Activated CD8-positive, alpha-beta T cell treated with anti-CD3 and anti-CD28 coated beads for 36 hours (primary cell): ENCODE measurements at regions of chr5 and their contacts with region 1.

Region 1: GRCh38 chr5:178153573-178154343 is at the start of gene NHP2:
- DNase-seq: peak; percentile 99
- ATAC-seq: peak; percentile 98
- H3K4me3 Mint-ChIP-seq: peak within 1 kb of the TSS; percentile 97
- H3K27ac Mint-ChIP-seq: peak within 1 kb of the TSS; percentile 87
- H3K4me1 Mint-ChIP-seq: peaks cover 41% of the 10 kb centered on the region
- H3K27me3 Mint-ChIP-seq: no peaks in the 10 kb centered on the region
- CTCF ChIP-seq: no peak
- total RNA-seq, gene NHP2: 287 to 296 TPM

Region 2: DNA sequence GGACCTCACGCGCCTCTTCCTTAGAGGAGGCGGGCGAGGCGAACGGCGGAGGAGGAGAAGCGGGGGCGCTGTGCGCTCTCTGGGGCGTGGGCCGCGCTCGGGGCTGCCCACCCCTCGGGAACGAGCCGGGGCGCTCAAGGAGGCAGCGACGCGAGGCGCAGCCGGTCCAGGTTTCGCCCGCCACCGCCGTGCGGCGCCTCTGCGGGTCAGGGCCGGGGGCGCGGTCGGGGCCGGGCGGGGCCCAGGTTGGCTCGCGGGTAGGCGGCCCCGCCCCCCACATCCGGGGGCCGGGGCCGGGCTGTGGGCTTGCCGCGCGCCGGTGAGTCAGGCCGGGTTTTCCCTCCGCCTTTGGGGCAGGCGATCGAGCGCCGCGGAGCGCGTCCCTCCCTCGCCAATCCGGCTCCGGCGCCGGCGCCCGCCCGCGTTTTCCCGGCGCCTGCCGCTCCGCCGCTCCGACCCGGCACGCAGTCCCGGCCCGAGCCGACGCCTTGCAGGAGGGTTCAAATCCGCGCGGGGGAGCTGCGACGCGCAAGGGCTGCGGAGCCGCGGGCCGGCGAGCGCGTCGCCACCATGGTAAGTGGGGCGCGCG is 40.5 kb before region 1 on chr5 and contains the start of gene N4BP3:
- CTCF ChIA-PET with region 1: interaction called, 84 read pairs
- POLR2A ChIA-PET with region 1: interaction called, 7 read pairs
- intact Hi-C with region 1: loop called (anchors 5 kb)
- DNase-seq: peak; percentile 88
- ATAC-seq: peak; percentile 63
- H3K4me3 Mint-ChIP-seq: peak within 1 kb of the TSS; percentile 98
- H3K27ac Mint-ChIP-seq: peak within 1 kb of the TSS; percentile 95
- H3K4me1 Mint-ChIP-seq: peaks cover 23% of the 10 kb centered on the region
- H3K27me3 Mint-ChIP-seq: no peaks in the 10 kb centered on the region
- CTCF ChIP-seq: no peak
- total RNA-seq, gene N4BP3: 33.2 to 33.4 TPM

Region 3: GRCh38 chr5:178163772-178164735 is 10.3 kb after region 1 on chr5:
- CTCF ChIA-PET with region 1: interaction called, 19 read pairs
- POLR2A ChIA-PET with region 1: interaction called, 8 read pairs
- intact Hi-C with region 1: no loop called
- DNase-seq: peak; percentile 91
- ATAC-seq: peak; percentile 100
- H3K4me3 Mint-ChIP-seq: peak overlapping the region; percentile 44
- H3K27ac Mint-ChIP-seq: no peak overlapping the region
- H3K4me1 Mint-ChIP-seq: peaks cover 6% of the 10 kb centered on the region
- H3K27me3 Mint-ChIP-seq: peaks cover 6% of the 10 kb centered on the region
- CTCF ChIP-seq: peak; percentile 98